Activated CD4-positive, alpha-beta memory T cell treated with anti-CD3 and anti-CD28 coated beads for 36 hours (primary cell): ENCODE measurements at regions of chr2 and their contacts with region 1.

Region 1: GRCh38 chr2:73886357-73886756 is 6.5 kb upstream of the ACTG2 start:
- DNase-seq: peak; percentile 67
- H3K4me3 Mint-ChIP-seq: no peak overlapping the region
- H3K27ac Mint-ChIP-seq: no peak overlapping the region
- H3K4me1 Mint-ChIP-seq: peaks cover 18% of the 10 kb centered on the region
- H3K27me3 Mint-ChIP-seq: peaks cover 3% of the 10 kb centered on the region

Region 2: GRCh38 chr2:73640511-73640911 is 245.8 kb before region 1 on chr2:
- CTCF ChIA-PET with region 1: no interaction called
- POLR2A ChIA-PET with region 1: no interaction called
- intact Hi-C with region 1: no loop called
- DNase-seq: no peak
- H3K4me3 Mint-ChIP-seq: no peak overlapping the region
- H3K27ac Mint-ChIP-seq: no peak overlapping the region
- H3K4me1 Mint-ChIP-seq: no peaks in the 10 kb centered on the region
- H3K27me3 Mint-ChIP-seq: peaks cover 12% of the 10 kb centered on the region

Region 3: DNA sequence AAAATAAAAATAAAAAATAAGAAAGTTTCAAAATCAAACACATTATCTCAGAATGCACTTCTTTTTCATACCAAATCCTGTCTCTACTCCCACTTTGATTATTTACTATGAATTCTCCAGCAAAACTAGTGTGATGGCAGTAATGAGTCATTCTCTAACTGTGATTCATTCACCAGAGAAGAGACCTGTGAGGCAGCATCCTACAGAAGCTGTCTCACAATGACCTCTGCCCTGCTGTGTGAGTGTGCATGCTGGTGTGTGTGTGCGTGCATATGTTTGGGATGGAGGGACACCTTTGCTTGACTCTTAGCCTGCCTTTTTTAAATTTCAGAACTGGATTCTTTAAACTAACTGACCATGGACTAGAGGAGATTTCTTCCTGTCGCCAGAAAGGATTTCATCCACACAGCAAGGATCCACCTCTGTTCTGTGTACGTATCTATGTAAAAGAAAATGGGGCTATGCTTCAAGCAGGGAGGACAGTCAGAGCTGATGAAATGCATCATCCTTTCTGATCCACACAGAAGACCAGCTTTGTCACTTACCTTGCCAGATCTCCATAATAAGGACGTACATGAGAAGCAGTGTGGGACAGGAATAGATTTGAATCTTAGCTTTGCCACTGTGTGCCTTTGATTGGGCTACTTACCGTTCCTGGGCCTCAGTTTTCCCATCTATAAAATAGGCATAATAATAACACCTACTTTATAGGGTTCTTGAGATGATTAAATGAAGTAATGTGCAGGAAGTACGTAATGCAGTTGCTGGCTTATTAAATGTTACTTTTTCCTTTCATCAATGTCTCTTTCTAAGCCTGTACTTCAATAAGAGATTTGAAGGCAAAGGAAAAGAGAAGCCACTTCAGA is 26.4 kb before region 1 on chr2:
- CTCF ChIA-PET with region 1: no interaction called
- POLR2A ChIA-PET with region 1: no interaction called
- intact Hi-C with region 1: loop called (anchors 1 kb)
- DNase-seq: peak; percentile 76
- H3K4me3 Mint-ChIP-seq: no peak overlapping the region
- H3K27ac Mint-ChIP-seq: peak overlapping the region; percentile 59
- H3K4me1 Mint-ChIP-seq: peaks cover 33% of the 10 kb centered on the region
- H3K27me3 Mint-ChIP-seq: no peaks in the 10 kb centered on the region

Region 4: GRCh38 chr2:73896362-73897239 is 10.2 kb after region 1 on chr2:
- CTCF ChIA-PET with region 1: no interaction called
- POLR2A ChIA-PET with region 1: interaction called, 3 read pairs
- intact Hi-C with region 1: loop called (anchors 1 kb)
- DNase-seq: peak; percentile 62
- H3K4me3 Mint-ChIP-seq: no peak overlapping the region
- H3K27ac Mint-ChIP-seq: peak overlapping the region; percentile 73
- H3K4me1 Mint-ChIP-seq: peaks cover 23% of the 10 kb centered on the region
- H3K27me3 Mint-ChIP-seq: no peaks in the 10 kb centered on the region